ENCODE measurements at regions of chr15 and their contacts with region 1.

Region 1: GRCh38 chr15:87477793-87478686 is 778.5 kb downstream of the NTRK3 start:
- DNase-seq: no peak

Region 2: DNA sequence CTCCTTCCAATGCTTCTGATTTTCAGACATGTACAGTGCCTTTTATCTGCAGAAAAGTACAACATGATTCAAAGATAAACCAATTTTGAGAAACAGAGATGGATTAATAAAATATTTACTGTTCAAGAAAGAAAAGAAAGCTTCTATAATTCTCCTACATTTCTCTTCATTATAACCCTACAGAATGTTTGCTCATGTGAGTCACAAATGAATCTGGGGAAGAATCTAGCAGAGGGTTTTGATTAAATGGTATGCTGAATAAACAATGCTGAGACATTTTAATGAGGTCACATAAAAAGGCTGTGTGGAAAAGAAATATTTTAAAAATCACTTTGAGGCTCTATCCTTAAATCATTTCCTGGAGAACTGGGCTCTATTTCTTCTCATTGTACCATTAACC is 50.8 kb after region 1 on chr15:
- intact Hi-C with region 1: no loop called
- DNase-seq: no peak

Region 3: DNA sequence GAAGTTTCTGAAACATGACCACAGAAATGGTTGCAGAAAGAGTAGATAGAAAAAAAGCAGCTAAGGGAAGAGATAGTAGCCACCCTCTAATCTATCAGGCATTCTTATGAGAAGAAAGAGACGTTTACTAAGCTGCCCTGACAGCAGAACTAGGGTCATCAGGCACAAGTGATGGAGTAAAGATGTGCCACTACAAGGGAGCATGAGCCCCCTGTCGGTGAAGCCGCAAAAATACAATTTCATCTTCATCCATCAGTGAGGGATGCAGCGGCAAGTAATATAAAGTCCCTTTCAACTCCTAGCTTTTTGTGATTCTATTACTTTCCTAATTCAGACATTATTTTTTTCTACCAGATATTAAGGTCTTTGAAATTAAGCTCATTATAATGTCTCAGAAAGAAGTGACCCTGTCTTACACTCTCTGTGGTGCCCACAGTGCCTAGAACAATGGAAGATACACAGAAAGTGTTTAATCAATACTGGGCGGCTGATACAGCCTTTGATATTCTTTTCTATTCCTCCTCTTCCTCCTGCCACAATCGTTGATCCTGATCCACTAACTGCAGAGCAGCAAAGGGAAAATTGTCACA is 126.9 kb after region 1 on chr15:
- intact Hi-C with region 1: loop called (anchors 10 kb)
- DNase-seq: no peak

Measured in cardiac septum (tissue), 1 donor.